Activated CD8-positive, alpha-beta T cell treated with anti-CD3 and anti-CD28 coated beads for 36 hours (primary cell): ENCODE measurements at regions of chr14 and their contacts with region 1.

Region 1: DNA sequence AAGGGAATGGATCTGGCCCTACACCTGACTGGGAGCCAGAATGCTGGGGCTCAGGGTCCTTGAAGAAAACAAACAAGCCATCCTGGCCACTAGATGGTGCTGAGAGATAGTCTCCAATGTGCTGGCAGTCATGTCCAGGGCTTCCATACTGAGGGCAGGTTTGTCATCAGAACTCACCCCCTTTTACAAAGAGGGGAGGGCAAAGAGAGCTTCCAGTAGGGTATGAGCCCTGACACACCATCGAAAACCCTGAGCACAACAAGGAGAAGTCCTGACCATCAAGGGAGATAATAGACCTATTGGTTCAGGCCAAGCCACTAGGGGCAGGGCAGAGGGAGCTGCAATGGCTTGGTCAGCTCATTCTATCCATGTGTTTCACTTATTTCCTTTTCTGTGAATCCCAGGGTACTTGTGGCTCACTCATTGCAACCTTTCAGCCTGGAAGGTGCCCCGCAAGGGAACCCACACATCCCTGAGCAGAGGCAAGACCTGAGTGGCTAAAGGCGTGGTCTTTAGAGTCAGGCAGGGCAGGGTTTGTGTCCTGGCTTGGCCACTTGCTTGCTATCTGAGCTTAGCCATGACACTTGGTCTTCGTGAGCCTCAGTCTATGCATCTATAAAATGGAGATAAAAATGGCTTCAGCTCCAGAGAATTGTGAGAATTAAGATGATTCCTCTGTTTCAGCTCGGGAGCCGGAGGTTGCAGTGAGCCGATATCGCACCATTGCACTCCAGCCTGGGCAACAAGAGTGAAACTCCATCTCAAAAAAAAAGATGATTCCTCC is 6.2 kb upstream of the PLEKHH1 start:
- DNase-seq: peak; percentile 65
- ATAC-seq: peak; percentile 94
- H3K4me3 Mint-ChIP-seq: no peak overlapping the region
- H3K27ac Mint-ChIP-seq: no peak overlapping the region
- H3K4me1 Mint-ChIP-seq: no peaks in the 10 kb centered on the region
- H3K27me3 Mint-ChIP-seq: peaks cover 19% of the 10 kb centered on the region
- CTCF ChIP-seq: peak; percentile 71

Region 2: DNA sequence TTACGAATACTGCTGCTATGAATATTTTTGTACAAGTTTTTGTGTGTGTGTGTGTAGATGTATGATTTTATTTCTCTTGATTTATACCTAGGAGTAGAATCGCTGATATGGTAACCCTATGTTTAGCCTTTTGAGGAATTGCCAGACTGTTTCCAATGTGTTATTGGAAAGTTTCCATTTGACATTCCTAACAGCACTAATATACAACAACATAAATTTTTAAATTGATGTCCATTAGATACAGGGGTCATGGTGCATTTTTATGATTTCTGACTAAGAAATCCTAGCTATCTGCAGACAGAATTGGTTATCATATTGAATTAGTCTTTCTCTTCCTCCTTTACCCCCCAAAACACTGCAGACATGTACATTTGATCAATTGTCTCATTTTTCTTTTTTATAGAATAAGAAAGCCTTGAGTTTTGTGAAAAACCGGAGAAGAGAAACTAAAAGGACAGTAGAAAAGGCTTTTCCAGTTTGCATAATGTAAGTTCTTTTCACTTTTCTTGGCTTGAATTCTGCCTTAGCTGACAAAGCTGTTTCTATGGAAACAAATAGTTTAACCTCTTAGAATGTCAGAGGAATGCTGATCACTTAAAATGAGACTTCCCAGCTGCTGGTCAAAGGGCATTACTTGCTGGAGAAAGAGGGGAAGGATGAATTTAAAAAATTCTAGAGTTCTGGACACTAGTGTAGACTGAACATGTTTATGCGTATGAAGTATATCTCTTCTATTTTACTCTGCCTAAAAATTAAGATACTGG is 257.4 kb before region 1 on chr14:
- CTCF ChIA-PET with region 1: no interaction called
- POLR2A ChIA-PET with region 1: no interaction called
- intact Hi-C with region 1: no loop called
- DNase-seq: no peak
- ATAC-seq: no peak
- H3K4me3 Mint-ChIP-seq: no peak overlapping the region
- H3K27ac Mint-ChIP-seq: no peak overlapping the region
- H3K4me1 Mint-ChIP-seq: peaks cover 12% of the 10 kb centered on the region
- H3K27me3 Mint-ChIP-seq: no peaks in the 10 kb centered on the region
- CTCF ChIP-seq: no peak

Region 3: DNA sequence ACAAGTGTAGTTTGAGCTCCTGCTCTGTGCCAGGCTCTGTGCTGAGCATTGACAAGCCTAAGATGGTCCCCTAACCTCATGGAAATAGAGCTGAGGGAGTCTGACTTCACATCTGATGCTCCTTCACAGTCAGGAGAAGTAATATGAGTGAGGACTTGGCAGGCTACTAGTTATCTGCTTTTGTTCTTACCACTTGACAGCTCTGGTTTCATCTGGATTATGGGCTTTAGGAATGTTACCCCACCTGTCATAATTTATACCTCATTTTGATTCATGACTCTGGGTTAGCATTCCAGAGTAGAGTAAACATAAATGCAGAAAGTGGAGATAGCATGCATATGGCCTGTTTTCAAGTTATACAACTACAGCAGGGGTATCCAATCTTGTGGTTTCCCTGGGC is 207.7 kb before region 1 on chr14:
- CTCF ChIA-PET with region 1: no interaction called
- POLR2A ChIA-PET with region 1: no interaction called
- intact Hi-C with region 1: no loop called
- DNase-seq: no peak
- ATAC-seq: no peak
- H3K4me3 Mint-ChIP-seq: no peak overlapping the region
- H3K27ac Mint-ChIP-seq: no peak overlapping the region
- H3K4me1 Mint-ChIP-seq: no peaks in the 10 kb centered on the region
- H3K27me3 Mint-ChIP-seq: no peaks in the 10 kb centered on the region
- CTCF ChIP-seq: no peak

Region 4: DNA sequence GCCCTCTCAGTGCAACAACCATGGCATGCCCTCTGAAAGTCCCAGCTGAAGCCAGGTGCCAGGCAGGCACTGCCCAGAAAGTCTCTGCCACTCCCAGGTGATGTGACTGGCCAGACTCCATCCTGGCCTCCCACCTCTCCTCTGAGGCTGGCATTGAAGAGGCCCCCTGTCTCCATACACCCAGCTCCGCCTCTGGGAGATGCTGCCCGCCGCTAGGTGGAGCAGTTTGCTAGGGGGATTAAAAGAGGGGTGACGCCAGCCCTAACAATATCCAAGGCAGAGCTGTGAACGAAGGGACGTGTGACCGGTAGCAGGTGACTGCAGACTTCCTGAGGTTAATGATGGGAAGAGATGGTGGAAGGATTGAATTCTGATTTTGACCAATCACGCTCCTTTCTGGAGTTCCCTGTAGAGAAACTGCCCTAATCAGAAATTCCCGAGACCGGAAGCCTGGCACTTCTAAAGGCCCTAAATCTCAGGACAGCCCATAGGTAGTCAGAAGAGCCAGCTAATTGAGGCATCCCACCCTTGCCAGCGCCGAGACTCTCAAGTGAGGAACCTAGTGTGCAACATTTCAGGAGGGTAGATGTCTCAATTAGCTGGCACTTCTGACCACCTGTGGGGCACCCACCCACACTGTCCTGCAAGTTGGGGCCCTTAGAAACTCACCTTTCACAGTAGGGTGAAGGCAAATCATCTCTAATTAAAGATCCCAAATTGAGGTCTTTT is 106.6 kb before region 1 on chr14:
- CTCF ChIA-PET with region 1: interaction called, 48 read pairs
- POLR2A ChIA-PET with region 1: no interaction called
- intact Hi-C with region 1: loop called (anchors 5 kb)
- DNase-seq: peak; percentile 53
- ATAC-seq: peak; percentile 67
- H3K4me3 Mint-ChIP-seq: no peak overlapping the region
- H3K27ac Mint-ChIP-seq: no peak overlapping the region
- H3K4me1 Mint-ChIP-seq: no peaks in the 10 kb centered on the region
- H3K27me3 Mint-ChIP-seq: peaks cover 13% of the 10 kb centered on the region
- CTCF ChIP-seq: peak; percentile 62

Region 5: GRCh38 chr14:67467179-67468080 is 59.4 kb before region 1 on chr14:
- CTCF ChIA-PET with region 1: interaction called, 11 read pairs
- POLR2A ChIA-PET with region 1: no interaction called
- intact Hi-C with region 1: no loop called
- DNase-seq: no peak
- ATAC-seq: no peak
- H3K4me3 Mint-ChIP-seq: no peak overlapping the region
- H3K27ac Mint-ChIP-seq: no peak overlapping the region
- H3K4me1 Mint-ChIP-seq: peaks cover 27% of the 10 kb centered on the region
- H3K27me3 Mint-ChIP-seq: no peaks in the 10 kb centered on the region
- CTCF ChIP-seq: no peak

Region 6: GRCh38 chr14:67508956-67509355 is 17.9 kb before region 1 on chr14:
- CTCF ChIA-PET with region 1: interaction called, 33 read pairs
- POLR2A ChIA-PET with region 1: interaction called, 4 read pairs
- intact Hi-C with region 1: no loop called
- DNase-seq: no peak
- ATAC-seq: no peak
- H3K4me3 Mint-ChIP-seq: no peak overlapping the region
- H3K27ac Mint-ChIP-seq: peak overlapping the region; percentile 50
- H3K4me1 Mint-ChIP-seq: peaks cover 19% of the 10 kb centered on the region
- H3K27me3 Mint-ChIP-seq: no peaks in the 10 kb centered on the region
- CTCF ChIP-seq: no peak

Region 7: GRCh38 chr14:67541448-67542387 is 14.8 kb after region 1 on chr14:
- CTCF ChIA-PET with region 1: interaction called, 13 read pairs
- POLR2A ChIA-PET with region 1: interaction called, 3 read pairs
- intact Hi-C with region 1: no loop called
- DNase-seq: peak; percentile 56
- ATAC-seq: peak; percentile 56
- H3K4me3 Mint-ChIP-seq: peak overlapping the region; percentile 58
- H3K27ac Mint-ChIP-seq: no peak overlapping the region
- H3K4me1 Mint-ChIP-seq: peaks cover 8% of the 10 kb centered on the region
- H3K27me3 Mint-ChIP-seq: peaks cover 16% of the 10 kb centered on the region
- CTCF ChIP-seq: no peak

Region 8: DNA sequence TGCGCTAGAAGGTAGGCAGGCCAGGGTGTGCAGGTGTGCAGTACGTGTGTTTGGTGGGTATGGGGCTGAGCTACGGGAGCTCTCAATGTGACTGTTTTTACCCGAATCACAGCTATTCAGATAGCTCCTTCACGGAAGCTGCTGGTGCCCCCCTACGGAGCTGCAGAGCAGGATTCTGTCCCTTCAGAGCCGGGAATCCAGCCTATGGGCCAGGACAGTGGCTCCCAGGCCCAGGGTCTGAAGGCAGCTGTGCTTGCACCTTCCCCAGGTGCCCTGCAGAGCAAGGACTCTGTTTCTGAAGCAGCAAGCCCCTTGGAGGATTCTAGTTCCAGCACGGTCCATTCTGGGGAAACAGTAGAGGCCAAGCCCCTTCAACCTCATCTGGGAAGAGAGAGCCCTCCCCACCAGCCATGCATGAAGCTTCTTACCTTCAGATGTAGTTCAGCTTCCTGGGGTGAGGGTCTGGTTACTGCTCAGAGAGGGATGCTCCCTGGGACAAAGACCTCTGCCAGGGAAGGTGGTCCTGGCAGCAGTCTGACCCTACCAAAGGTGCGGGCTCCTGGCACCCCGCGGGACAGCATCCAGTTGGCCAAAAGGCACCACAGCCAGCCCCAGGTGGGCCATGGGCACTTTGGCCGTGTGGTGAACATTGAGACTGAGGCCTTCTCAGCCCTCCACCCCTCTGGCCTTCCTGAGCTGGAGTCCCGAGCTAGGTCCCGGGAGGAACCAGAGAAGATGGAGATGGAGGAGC is 35.3 kb after region 1 on chr14:
- CTCF ChIA-PET with region 1: interaction called, 18 read pairs
- POLR2A ChIA-PET with region 1: no interaction called
- intact Hi-C with region 1: loop called (anchors 5 kb)
- DNase-seq: no peak
- ATAC-seq: no peak
- H3K4me3 Mint-ChIP-seq: no peak overlapping the region
- H3K27ac Mint-ChIP-seq: no peak overlapping the region
- H3K4me1 Mint-ChIP-seq: no peaks in the 10 kb centered on the region
- H3K27me3 Mint-ChIP-seq: no peaks in the 10 kb centered on the region
- CTCF ChIP-seq: no peak

Region 9: DNA sequence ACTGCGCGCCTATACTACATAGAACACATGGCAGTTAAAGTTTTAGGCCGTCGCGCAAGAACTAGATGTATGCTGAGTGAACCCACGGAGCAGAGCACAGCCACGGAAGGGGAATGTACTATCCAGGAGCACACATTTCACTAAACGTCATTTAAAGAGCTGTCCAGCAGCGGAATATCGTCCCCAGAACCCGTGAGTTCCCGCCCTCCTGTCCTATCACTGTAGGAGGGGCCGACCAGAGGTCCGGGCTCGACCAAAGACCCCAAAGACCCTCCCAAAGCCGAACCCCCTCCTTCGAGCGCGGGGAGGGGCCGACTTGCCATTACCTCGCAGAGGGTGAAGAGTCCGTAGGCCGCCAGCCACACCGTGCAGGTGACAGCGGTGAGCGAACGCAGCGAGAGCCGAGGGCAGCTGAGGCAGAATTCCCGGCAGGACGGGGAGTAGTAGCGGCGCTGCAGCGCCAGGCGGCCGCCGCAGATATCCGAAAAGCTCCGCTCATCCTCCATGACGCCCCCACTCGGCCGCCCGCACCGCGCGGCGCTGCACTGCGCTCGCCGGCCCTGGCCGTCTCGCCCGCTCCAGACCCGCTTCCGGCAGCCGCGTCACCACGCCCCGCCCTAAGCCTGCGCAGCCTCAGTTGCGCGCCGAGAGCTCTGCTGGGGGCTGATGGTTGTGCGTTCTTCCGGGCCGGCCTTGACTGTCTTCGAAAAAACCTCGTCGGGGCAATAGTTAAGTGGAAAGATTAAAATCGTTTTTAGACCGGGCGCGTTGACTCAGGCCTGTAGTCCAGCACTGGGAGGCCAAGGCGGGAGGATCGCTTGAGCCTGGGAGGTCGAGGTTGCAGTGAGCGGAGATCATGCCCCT is 73.1 kb after region 1 on chr14 and contains the start of gene PIGH:
- CTCF ChIA-PET with region 1: no interaction called
- POLR2A ChIA-PET with region 1: no interaction called
- intact Hi-C with region 1: no loop called
- DNase-seq: peak; percentile 95
- ATAC-seq: peak; percentile 100
- H3K4me3 Mint-ChIP-seq: peak within 1 kb of the TSS; percentile 89
- H3K27ac Mint-ChIP-seq: peak within 1 kb of the TSS; percentile 94
- H3K4me1 Mint-ChIP-seq: peaks cover 41% of the 10 kb centered on the region
- H3K27me3 Mint-ChIP-seq: no peaks in the 10 kb centered on the region
- CTCF ChIP-seq: peak; percentile 44
- total RNA-seq, gene PIGH: 20.3 to 21.9 TPM

Region 10: GRCh38 chr14:67666750-67667449 is 140.0 kb after region 1 on chr14:
- CTCF ChIA-PET with region 1: interaction called, 13 read pairs
- POLR2A ChIA-PET with region 1: no interaction called
- intact Hi-C with region 1: no loop called
- DNase-seq: peak; percentile 44
- ATAC-seq: peak; percentile 87
- H3K4me3 Mint-ChIP-seq: no peak overlapping the region
- H3K27ac Mint-ChIP-seq: peak overlapping the region; percentile 61
- H3K4me1 Mint-ChIP-seq: peaks cover 53% of the 10 kb centered on the region
- H3K27me3 Mint-ChIP-seq: no peaks in the 10 kb centered on the region
- CTCF ChIP-seq: peak; percentile 47